Kidney (tissue), 22 donors: ENCODE measurements at regions of chr18 and their contacts with region 1.

Region 1: GRCh38 chr18:62437235-62438017 is 85.4 kb upstream of the ZCCHC2 start:
- DNase-seq: peak in 1 of 5 donors; percentile 85
- H3K4me3 ChIP-seq: no peak overlapping the region
- H3K27ac ChIP-seq: peak overlapping the region; percentile 63 to 74
- H3K4me1 ChIP-seq: peaks cover 0 to 2% (median 0%) of the 10 kb centered on the region in 3 donors
- H3K27me3 ChIP-seq: no peaks in the 10 kb centered on the region
- CTCF ChIP-seq: no peak

Region 2: GRCh38 chr18:62499263-62499650 is 61.8 kb after region 1 on chr18:
- intact Hi-C with region 1: no loop called
- DNase-seq: no peak
- H3K4me3 ChIP-seq: no peak overlapping the region
- H3K27ac ChIP-seq: no peak overlapping the region
- H3K4me1 ChIP-seq: no peaks in the 10 kb centered on the region
- H3K27me3 ChIP-seq: no peaks in the 10 kb centered on the region
- CTCF ChIP-seq: no peak

Region 3: GRCh38 chr18:62576845-62577512 is 139.6 kb after region 1 on chr18:
- intact Hi-C with region 1: loop called (anchors 10 kb)
- DNase-seq: no peak
- H3K4me3 ChIP-seq: no peak overlapping the region
- H3K27ac ChIP-seq: no peak overlapping the region
- H3K4me1 ChIP-seq: peaks cover 0 to 2% (median 0%) of the 10 kb centered on the region in 3 donors
- H3K27me3 ChIP-seq: no peaks in the 10 kb centered on the region
- CTCF ChIP-seq: no peak